ENCODE measurements at regions of chr10 and their contacts with region 1.

Region 1: DNA sequence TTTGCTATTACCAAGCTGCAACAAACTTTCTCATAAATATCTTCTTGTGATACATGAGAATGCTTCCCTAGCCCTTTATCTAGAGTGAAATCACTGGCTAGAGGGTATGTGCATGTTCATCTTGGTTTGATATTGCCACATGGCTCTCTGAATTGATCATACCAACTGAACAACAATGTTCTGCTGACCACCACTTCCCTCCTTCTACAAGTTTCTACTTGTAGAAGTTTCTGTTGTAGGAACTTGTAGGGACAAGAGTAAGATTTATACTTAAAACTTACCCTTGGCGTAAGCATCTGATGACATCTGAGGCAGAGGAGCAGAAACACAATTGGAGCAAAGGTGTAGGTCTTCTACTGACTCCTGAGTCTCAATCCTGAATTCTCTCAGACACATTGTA is 86.3 kb upstream of the FAM13C start:
- DNase-seq: no peak
- H3K27ac ChIP-seq: no peak overlapping the region
- CTCF ChIP-seq: no peak

Region 2: GRCh38 chr10:59315465-59315864 is 133.2 kb before region 1 on chr10:
- CTCF ChIA-PET with region 1: no interaction called
- POLR2A ChIA-PET with region 1: no interaction called
- DNase-seq: no peak
- H3K27ac ChIP-seq: no peak overlapping the region
- CTCF ChIP-seq: no peak

Region 3: GRCh38 chr10:59384761-59385160 is 63.9 kb before region 1 on chr10:
- CTCF ChIA-PET with region 1: interaction called, 10 read pairs
- POLR2A ChIA-PET with region 1: no interaction called
- DNase-seq: no peak
- H3K27ac ChIP-seq: no peak overlapping the region
- CTCF ChIP-seq: no peak

Region 4: GRCh38 chr10:59479426-59479825 is 30.8 kb after region 1 on chr10:
- CTCF ChIA-PET with region 1: no interaction called
- POLR2A ChIA-PET with region 1: no interaction called
- DNase-seq: no peak
- H3K27ac ChIP-seq: no peak overlapping the region
- CTCF ChIP-seq: no peak